ENCODE measurements at regions of chr16 and their contacts with region 1.

Region 1: GRCh38 chr16:84315394-84315793 is 20.7 kb downstream of the WFDC1 start:
- DNase-seq: no peak
- ATAC-seq: no peak
- H3K4me3 ChIP-seq: no peak overlapping the region
- H3K27ac ChIP-seq: no peak overlapping the region
- H3K4me1 ChIP-seq: peaks cover 0 to 7% (median 0%) of the 10 kb centered on the region in 12 donors
- H3K27me3 ChIP-seq: peaks cover 3 to 28% (median 14%) of the 10 kb centered on the region in 9 donors
- CTCF ChIP-seq: no peak
- POLR2A ChIP-seq: no peak

Region 2: DNA sequence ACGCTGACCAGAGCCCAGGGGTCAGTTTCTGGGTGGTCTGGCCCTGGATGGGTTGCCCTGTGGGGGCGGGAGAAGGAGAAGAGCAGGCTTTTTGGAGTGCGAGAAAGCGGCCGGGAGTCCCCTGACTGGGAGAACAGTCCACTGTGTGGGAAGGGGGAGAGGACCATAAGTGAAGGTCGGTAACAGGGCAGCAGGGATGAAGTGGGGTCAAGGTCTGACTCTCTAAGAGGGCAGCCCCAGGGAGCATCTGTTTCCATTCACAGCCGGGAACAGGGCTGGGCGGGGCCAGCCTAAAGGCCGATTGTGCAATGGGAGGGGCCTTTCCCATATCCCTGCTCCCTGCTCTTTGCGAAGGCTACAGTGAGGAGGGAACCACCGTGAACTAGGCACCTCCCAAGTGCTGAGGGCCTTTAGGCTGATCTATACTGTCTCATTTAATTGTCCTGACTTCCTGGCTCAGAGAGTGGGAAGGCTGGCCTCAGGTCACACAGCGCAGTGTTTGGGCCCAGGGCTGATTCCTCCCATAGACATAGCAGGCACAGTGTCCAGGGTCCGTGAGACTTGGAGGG is 31.2 kb before region 1 on chr16:
- intact Hi-C with region 1: loop called in 1 of 10 experiments (anchors 5 kb)
- DNase-seq: peak; percentile 42 to 81 (median 73)
- ATAC-seq: peak; percentile 59 to 88 (median 84)
- H3K4me3 ChIP-seq: no peak overlapping the region
- H3K27ac ChIP-seq: peak overlapping the region in 11 of 12 donors; percentile 4 to 68 (median 56)
- H3K4me1 ChIP-seq: peaks cover 0 to 33% (median 18%) of the 10 kb centered on the region in 12 donors
- H3K27me3 ChIP-seq: peaks cover 0 to 11% (median 0%) of the 10 kb centered on the region in 9 donors
- CTCF ChIP-seq: no peak
- POLR2A ChIP-seq: no peak

Region 3: DNA sequence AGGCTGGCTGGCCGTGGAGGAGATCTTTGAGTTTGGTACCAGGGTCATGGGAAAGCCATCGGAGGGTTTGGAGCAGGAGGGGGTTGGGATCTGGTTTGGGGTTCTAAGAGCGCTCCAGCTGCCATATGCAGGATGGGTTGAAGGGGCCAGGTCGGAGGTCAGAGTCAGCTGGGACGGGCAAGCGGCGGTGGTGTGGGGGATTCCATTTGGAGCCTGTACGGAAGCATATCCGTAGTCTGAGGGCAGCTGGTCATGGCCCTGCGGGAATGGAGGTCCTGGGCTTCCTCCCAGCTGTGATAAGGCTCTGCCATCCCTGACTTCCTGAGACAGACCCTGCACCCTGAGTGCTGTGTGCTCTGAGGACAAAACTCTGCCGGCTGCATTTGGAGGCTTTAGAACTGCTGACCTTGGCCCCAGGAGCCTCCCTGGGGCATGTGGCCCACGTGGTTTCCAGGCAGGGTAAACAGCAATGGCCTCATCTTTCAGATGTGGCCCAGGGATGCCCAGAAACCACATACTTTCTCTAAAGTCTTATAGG is 99.5 kb after region 1 on chr16:
- intact Hi-C with region 1: no loop called
- DNase-seq: peak in 1 of 5 donors; percentile 30
- ATAC-seq: peak in 2 of 4 donors; percentile 11 to 34
- H3K4me3 ChIP-seq: no peak overlapping the region
- H3K27ac ChIP-seq: no peak overlapping the region
- H3K4me1 ChIP-seq: peaks cover 0 to 6% (median 0%) of the 10 kb centered on the region in 12 donors
- H3K27me3 ChIP-seq: no peaks in the 10 kb centered on the region
- CTCF ChIP-seq: no peak
- POLR2A ChIP-seq: no peak